Calu3 (cell line): ENCODE measurements at regions of chr3 and their contacts with region 1.

Region 1: DNA sequence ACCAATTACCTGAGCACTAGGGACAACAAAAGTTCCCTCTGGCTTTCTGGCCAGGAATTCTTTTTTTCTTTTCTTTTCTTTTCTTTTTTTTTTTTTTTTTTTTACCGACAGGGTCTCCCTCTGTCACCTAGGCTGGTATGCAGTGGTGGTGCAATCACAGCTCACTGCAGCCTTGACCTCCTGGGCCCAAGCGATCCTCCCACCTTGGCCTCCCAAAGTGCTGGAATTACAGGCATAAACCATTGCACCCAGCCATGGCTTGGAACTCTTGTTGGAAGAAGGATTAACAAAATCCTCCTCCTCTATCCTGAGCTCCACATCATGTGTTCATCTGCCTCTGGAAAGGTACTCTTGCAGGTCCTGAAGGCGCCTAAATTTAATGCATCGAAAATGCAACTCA is 2.9 kb upstream of the LTF start:
- DNase-seq: no peak
- H3K4me3 Mint-ChIP-seq: no peak overlapping the region
- H3K27ac Mint-ChIP-seq: no peak overlapping the region
- H3K4me1 Mint-ChIP-seq: no peaks in the 10 kb centered on the region
- H3K27me3 Mint-ChIP-seq: peaks cover 78% of the 10 kb centered on the region
- CTCF ChIP-seq: no peak

Region 2: DNA sequence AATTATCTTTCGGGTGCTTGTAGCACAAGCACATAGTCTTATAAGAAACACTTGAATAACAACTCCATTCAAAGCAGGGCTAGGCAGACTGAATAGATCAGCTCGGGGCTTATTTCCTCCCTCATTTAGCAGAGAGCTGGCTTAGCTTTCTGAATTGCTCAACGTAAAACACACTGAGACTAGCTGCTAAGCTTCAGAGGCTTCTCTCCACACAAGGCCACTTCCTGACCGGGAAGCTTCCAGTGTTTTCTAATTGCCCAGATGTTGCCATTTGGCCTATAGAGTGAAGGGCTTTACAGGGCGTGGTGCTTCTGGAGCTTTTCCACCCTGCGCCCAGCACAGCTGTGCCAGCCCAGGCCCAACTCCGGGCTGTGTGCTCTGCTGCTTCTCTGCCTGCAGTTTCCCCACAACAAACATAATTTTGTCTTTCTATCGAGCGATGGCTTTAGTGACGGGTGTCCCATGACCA is 161.4 kb after region 1 on chr3:
- CTCF ChIA-PET with region 1: no interaction called
- intact Hi-C with region 1: no loop called
- DNase-seq: no peak
- H3K4me3 Mint-ChIP-seq: no peak overlapping the region
- H3K27ac Mint-ChIP-seq: no peak overlapping the region
- H3K4me1 Mint-ChIP-seq: no peaks in the 10 kb centered on the region
- H3K27me3 Mint-ChIP-seq: peaks cover 37% of the 10 kb centered on the region
- CTCF ChIP-seq: no peak

Region 3: GRCh38 chr3:46646700-46647099 is 179.1 kb after region 1 on chr3:
- CTCF ChIA-PET with region 1: interaction called, 10 read pairs
- intact Hi-C with region 1: no loop called
- DNase-seq: no peak
- H3K4me3 Mint-ChIP-seq: no peak overlapping the region
- H3K27ac Mint-ChIP-seq: no peak overlapping the region
- H3K4me1 Mint-ChIP-seq: no peaks in the 10 kb centered on the region
- H3K27me3 Mint-ChIP-seq: peaks cover 30% of the 10 kb centered on the region
- CTCF ChIP-seq: no peak